Activated naive CD8-positive, alpha-beta T cell treated with anti-CD3 and anti-CD28 coated beads, Interleukin-2, amount 10 ng/mL, durations not matched to agents 7 days and 5 days (primary cell): ENCODE measurements at regions of chr2 and their contacts with region 1.

Region 1: GRCh38 chr2:203238704-203239526 is at the start of gene CYP20A1:
- DNase-seq: peak; percentile 99
- ATAC-seq: peak; percentile 88
- H3K4me3 Mint-ChIP-seq: peak within 1 kb of the TSS; percentile 93
- H3K27ac Mint-ChIP-seq: peak within 1 kb of the TSS; percentile 99
- H3K4me1 Mint-ChIP-seq: peaks cover 19% of the 10 kb centered on the region
- H3K27me3 Mint-ChIP-seq: no peaks in the 10 kb centered on the region
- total RNA-seq, gene CYP20A1: 18.3 to 22.6 TPM

Region 2: DNA sequence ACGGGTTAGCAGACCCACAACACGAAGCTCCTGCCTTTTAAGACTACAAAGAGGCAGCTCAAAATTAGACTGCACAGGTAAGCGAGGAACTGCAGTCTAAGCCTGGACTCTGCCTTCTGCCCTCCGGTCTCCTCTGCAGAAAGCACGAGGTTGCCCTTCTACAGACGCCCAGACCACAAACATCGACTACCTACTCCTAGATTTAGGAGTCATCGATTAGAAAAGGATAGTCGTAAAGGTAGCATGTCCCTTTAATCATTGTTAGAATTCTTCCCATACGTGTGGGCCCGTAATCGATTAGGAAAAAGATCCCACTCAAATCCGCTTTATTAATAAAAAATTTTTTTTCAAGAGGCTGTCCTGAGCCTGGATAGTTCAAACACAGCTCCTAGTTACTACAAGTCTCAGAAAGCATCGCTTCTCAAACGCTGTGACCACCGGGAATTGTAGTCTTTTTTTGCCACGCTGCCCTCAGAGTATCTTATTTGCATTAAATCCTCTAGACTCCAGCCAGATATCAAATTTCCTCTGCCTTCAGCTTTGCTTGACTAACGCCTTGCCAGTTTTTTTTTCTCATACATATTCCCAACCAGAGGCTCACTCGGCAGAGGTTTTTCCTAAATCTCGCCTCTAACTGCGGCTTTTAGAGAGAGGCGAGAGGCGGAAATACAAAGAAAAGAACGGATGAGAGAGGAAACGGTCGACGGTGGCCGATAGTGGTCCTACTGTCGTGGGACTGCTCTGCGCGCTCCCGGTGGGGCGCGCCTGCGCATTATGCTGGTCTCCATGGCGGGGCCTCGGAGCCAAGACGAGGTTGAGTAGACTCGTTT is 327.2 kb before region 1 on chr2 and contains the starts of genes CARF and WDR12:
- POLR2A ChIA-PET with region 1: interaction called, 15 read pairs
- DNase-seq: peak; percentile 89
- ATAC-seq: peak; percentile 89
- H3K4me3 Mint-ChIP-seq: peak within 1 kb of the TSS; percentile 93
- H3K27ac Mint-ChIP-seq: peak within 1 kb of the TSS; percentile 96
- H3K4me1 Mint-ChIP-seq: peaks cover 25% of the 10 kb centered on the region
- H3K27me3 Mint-ChIP-seq: no peaks in the 10 kb centered on the region
- total RNA-seq, gene CARF: 14.6 to 16.9 TPM
- total RNA-seq, gene WDR12: 35.1 to 42.3 TPM

Region 3: GRCh38 chr2:203327901-203328759 is 89.2 kb after region 1 on chr2 and contains the start of gene ABI2:
- POLR2A ChIA-PET with region 1: interaction called, 14 read pairs
- DNase-seq: peak; percentile 77
- ATAC-seq: peak; percentile 58
- H3K4me3 Mint-ChIP-seq: peak within 1 kb of the TSS; percentile 92
- H3K27ac Mint-ChIP-seq: peak within 1 kb of the TSS; percentile 74
- H3K4me1 Mint-ChIP-seq: peaks cover 19% of the 10 kb centered on the region
- H3K27me3 Mint-ChIP-seq: peaks cover 4% of the 10 kb centered on the region
- total RNA-seq, gene ABI2: 39.9 to 44.6 TPM